Left cardiac atrium (tissue), 4 donors: ENCODE measurements at regions of chr16 and their contacts with region 1.

Region 1: GRCh38 chr16:84952335-84953189 is 58.8 kb downstream of the ZDHHC7 start:
- DNase-seq: peak; percentile 77
- ATAC-seq: peak; percentile 90 to 92

Region 2: DNA sequence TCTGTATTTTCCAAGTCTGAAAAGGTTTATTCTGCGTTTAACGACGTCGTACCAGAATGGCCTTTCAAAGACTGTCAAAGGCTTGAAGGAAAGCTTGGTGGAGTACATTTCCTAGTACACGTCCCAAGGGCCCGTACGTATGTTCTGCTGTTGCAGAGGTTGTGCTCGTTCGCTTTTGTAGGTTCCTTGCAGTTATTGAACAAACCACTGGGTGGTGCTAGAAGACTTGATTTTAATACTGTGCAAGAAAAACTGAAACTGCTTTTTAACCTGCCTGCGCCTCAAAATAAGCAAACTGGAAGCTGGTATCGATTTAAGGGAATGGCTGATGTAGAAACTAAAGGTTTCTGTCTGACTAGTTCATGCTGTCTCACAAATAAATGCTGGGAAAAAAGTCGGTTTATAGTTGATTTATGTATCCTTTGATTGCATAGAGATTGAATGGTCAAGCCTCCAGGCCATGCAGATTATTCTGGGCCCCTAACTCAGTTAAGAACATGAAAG is 198.2 kb before region 1 on chr16:
- intact Hi-C with region 1: loop called in 1 of 2 experiments (anchors 5 kb)
- DNase-seq: no peak
- ATAC-seq: peak; percentile 81 to 82